ENCODE measurements at regions of chr9 and their contacts with region 1.

Region 1: GRCh38 chr9:114968671-114969070 is 38.3 kb upstream of the TNFSF8 start:
- DNase-seq: no peak
- ATAC-seq: peak; percentile 85
- H3K4me3 ChIP-seq: no peak overlapping the region
- H3K27ac ChIP-seq: no peak overlapping the region
- H3K4me1 ChIP-seq: no peaks in the 10 kb centered on the region
- H3K27me3 ChIP-seq: no peaks in the 10 kb centered on the region; a peak in 1 of 4 replicates
- CTCF ChIP-seq: no peak
- EP300 ChIP-seq: no peak
- POLR2A ChIP-seq: no peak
- RAD21 ChIP-seq: no peak

Region 2: DNA sequence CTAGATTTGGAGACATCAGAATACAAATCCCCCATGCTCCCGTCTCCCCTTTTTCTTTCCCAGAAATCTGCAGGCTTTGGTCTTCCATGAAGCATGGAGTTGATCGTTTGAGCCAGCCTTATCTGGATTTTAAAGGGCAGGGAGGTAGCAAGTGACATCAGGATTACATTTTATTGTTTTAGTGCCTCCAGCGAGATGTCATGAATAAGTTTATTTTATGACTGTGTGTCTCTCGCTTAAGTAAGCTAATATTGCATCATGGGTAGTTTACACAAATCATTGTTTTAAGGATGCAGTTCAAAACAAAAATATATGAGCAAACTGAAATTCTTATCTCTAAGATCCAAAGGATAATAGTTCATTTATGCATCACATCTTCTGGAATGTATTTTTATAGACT is 12.4 kb after region 1 on chr9:
- CTCF ChIA-PET with region 1: interaction called, 21 read pairs
- POLR2A ChIA-PET with region 1: interaction called, 4 read pairs
- RAD21 ChIA-PET with region 1: no interaction called
- SMC1A ChIA-PET with region 1: interaction called, 46 read pairs
- in situ Hi-C with region 1: no loop called
- intact Hi-C with region 1: no loop called
- DNase-seq: no peak
- ATAC-seq: no peak
- H3K4me3 ChIP-seq: no peak overlapping the region
- H3K27ac ChIP-seq: no peak overlapping the region
- H3K4me1 ChIP-seq: no peaks in the 10 kb centered on the region
- H3K27me3 ChIP-seq: no peaks in the 10 kb centered on the region
- CTCF ChIP-seq: no peak
- EP300 ChIP-seq: no peak
- POLR2A ChIP-seq: no peak
- RAD21 ChIP-seq: no peak

Region 3: DNA sequence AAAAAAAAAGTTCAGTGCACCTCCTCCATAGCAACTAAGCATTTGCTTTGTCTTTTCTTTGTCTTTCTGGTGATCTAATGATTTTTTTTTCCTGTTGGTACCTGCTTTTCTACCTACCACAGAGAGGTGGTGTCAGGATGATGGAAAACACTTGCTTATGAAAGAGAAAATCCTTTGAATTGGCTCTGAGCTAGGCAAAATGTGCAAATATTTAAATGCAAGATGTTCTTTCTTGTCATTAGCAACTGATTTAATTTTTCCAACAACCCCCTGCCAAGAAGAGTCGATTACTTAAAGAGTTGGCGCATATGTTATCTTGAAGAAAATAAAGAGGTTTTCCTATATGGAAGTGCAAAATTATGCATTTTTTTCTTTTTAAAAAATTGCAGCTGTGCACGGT is 111.6 kb after region 1 on chr9:
- CTCF ChIA-PET with region 1: no interaction called
- POLR2A ChIA-PET with region 1: no interaction called
- RAD21 ChIA-PET with region 1: no interaction called
- SMC1A ChIA-PET with region 1: no interaction called
- in situ Hi-C with region 1: no loop called
- intact Hi-C with region 1: no loop called
- DNase-seq: no peak
- ATAC-seq: no peak
- H3K4me3 ChIP-seq: no peak overlapping the region
- H3K27ac ChIP-seq: no peak overlapping the region
- H3K4me1 ChIP-seq: no peaks in the 10 kb centered on the region
- H3K27me3 ChIP-seq: peaks cover 2 to 3% of the 10 kb centered on the region in 2 experiments; a peak in 3 of 4 replicates
- CTCF ChIP-seq: no peak
- EP300 ChIP-seq: no peak
- POLR2A ChIP-seq: no peak
- RAD21 ChIP-seq: no peak

Measured in GM12878 (cell line).